ENCODE measurements at regions of chr11 and their contacts with region 1.

Region 1: GRCh38 chr11:33996498-33997454 is 54.8 kb upstream of the CAPRIN1 start:
- DNase-seq: peak; percentile 85
- ATAC-seq: peak; percentile 98
- H3K4me3 Mint-ChIP-seq: no peak overlapping the region
- H3K27ac Mint-ChIP-seq: no peak overlapping the region
- H3K4me1 Mint-ChIP-seq: peaks cover 13% of the 10 kb centered on the region
- H3K27me3 Mint-ChIP-seq: peaks cover 23% of the 10 kb centered on the region

Region 2: GRCh38 chr11:34006876-34007275 is 10.1 kb after region 1 on chr11:
- CTCF ChIA-PET with region 1: interaction called, 12 read pairs
- POLR2A ChIA-PET with region 1: no interaction called
- DNase-seq: no peak
- ATAC-seq: no peak
- H3K4me3 Mint-ChIP-seq: no peak overlapping the region
- H3K27ac Mint-ChIP-seq: no peak overlapping the region
- H3K4me1 Mint-ChIP-seq: no peaks in the 10 kb centered on the region
- H3K27me3 Mint-ChIP-seq: peaks cover 34% of the 10 kb centered on the region

Region 3: DNA sequence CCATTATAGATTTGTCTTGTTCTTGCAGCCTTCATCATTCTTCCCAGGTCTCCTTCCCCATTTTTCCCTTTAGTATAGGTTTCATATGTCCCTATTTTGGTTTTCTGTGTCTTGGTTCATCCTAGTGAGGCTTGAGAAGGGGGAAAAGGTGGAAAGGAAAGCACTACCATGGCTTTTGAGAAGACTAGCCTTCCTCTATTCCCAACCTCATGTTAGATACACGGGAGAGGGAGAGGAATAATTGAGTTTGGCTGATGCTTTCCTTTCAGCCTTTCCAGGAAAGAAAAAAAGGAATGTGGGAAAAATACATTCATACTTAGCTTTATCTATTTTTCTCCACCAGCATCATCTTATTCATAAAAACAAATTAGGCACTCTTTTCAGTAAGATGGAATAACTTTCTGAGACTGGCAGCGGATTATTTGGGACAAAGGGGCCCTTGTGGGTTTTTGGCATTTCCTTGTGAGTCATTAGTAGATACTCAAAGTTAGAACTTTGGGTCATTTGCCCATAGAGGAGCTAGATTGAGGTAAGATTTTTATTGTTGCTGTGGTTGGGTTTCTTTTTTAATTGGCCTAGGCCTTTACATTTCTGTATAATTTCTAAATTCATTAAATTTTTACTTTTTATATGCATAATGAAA is 78.5 kb after region 1 on chr11:
- CTCF ChIA-PET with region 1: interaction called, 11 read pairs
- POLR2A ChIA-PET with region 1: no interaction called
- DNase-seq: no peak
- ATAC-seq: no peak
- H3K4me3 Mint-ChIP-seq: no peak overlapping the region
- H3K27ac Mint-ChIP-seq: no peak overlapping the region
- H3K4me1 Mint-ChIP-seq: peaks cover 25% of the 10 kb centered on the region
- H3K27me3 Mint-ChIP-seq: no peaks in the 10 kb centered on the region